Activated CD4-positive, alpha-beta memory T cell treated with anti-CD3 and anti-CD28 coated beads, Interleukin-2, amount 10 ng/mL, durations not matched to agents 7 days and 5 days (primary cell): ENCODE measurements at regions of chr14 and their contacts with region 1.

Region 1: DNA sequence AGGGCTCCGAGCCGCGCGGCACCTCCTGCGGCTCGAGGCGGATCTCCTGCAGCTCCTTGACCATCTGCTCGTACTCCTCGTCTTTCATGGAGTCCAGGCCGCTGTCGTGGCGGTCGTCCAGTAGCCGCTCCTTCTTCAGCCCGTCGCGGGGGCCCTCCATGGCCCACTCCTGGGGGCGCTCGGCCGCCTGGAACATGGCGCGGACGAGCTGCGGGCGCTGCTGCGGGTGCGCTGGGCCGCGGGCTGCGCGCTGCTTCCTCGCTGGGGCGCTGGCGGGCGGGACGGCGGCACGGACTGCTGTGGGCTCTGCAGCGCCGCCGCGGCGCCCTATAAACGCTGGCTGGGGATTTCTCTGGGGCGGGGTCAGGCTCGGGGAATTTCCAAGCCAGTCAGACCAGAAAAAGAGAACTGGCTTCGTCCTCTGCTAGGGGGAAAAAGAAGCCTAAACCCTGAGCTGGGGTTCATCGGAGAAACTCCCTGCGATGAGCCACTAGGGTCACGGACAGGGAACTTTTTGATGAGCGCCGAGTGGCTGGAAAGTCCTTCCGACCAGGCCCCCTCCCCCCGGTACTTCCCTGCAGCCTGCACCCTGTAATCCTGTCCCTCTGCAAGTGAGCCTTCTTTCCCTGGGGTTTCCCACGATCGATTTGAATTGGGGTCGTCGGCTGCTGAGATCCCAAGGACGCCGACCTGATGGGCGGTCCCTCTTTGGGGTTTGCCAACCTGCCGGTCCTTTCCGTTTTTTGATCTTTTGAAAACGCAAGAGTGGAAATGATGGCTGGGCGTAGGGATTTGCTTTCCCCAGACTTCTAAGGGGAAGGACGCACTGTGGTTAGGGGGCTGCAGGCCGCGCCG is at the start of gene NFKBIA:
- DNase-seq: peak; percentile 92
- H3K4me3 Mint-ChIP-seq: peak within 1 kb of the TSS; percentile 92
- H3K27ac Mint-ChIP-seq: peak within 1 kb of the TSS; percentile 95
- H3K4me1 Mint-ChIP-seq: peaks cover 54% of the 10 kb centered on the region
- H3K27me3 Mint-ChIP-seq: no peaks in the 10 kb centered on the region
- total RNA-seq, gene NFKBIA: 102 to 109 TPM

Region 2: DNA sequence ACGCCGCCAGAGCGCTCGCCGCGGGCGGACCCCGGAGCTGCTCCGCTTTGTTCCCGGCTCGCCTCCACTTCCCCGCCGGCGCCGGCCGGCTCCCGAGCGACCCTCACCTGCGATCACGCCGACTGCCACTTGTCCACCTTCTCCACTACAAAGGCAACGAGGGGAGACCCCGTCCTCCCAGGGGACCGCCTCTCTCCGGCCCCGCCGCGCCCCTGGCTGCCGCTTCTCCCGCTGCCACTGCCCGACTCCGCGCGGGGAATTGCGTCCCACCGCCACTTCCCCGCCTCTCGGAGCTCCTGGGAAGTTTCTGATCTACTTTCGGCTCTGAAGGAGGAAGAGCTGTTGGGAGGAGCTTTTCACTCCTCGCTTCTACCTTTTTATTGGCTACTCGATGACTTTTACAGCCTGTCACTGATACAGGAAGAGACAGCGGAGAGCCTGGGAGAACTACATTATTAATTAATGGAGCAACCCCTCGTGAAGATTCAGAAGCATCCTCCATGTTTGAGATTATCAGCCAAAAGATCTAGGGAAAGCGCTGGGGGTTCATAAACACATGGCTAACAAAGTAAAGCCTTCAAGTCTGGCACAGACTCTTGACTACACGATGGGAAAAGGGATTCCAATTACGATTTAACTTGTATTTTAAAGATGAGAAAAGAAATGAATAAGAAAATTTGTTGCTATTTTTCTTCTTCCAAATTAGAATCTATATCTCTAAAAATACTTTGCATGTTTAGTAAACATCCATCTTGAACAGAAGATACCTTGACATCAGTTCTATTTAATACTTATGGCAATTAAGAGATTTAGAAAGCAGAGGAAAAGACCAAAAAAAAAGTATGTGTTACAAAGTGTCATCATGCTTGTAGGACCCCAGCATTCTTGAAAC is 529.4 kb before region 1 on chr14 and contains the start of gene BAZ1A:
- CTCF ChIA-PET with region 1: no interaction called
- POLR2A ChIA-PET with region 1: interaction called, 12 read pairs
- DNase-seq: peak; percentile 44
- H3K4me3 Mint-ChIP-seq: peak within 1 kb of the TSS; percentile 96
- H3K27ac Mint-ChIP-seq: peak within 1 kb of the TSS; percentile 99
- H3K4me1 Mint-ChIP-seq: peaks cover 37% of the 10 kb centered on the region
- H3K27me3 Mint-ChIP-seq: no peaks in the 10 kb centered on the region
- total RNA-seq, gene BAZ1A: 49.8 to 53.1 TPM

Region 3: DNA sequence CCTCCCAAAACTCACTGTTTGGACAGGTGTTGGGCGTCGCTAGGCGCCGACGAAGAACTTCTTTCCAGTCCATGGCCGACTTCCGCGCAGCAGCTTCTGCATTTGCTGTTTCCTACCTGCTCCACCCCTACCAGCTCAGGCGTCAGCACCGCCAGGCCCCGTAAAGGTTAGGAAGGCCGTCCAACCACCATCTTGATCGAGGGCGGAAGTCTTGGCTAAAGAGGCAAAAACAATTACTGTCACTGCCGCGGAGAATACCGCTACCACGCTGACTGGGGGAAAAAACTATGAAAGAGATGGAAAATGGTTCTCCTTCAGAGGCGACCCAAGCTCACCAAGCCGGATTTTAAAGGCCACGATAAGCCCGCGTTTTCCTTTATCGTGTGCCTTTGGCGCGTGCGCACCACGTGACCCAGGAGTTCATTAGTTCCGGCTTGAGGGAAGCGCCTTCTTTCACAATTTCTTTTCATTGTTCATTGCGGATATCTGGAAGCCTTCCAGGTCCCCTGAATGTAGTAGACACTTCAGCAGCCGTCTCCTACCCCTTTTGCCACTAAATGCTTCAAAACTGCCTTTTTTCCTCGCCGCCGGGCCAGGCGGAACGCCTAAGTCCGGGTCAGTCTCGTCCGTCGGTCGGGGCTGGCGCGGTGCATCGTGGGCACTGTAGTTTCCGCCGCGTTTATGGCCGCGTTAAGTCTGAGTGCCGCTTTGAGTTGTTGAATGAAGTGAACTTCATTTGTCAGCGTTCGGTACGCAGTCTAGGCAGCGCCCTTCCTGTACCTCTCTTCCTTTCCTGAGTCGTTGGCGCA is 282.6 kb before region 1 on chr14 and contains the starts of genes PPP2R3C and PRORP:
- CTCF ChIA-PET with region 1: interaction called, 16 read pairs
- POLR2A ChIA-PET with region 1: interaction called, 55 read pairs
- DNase-seq: peak; percentile 92
- H3K4me3 Mint-ChIP-seq: peak within 1 kb of the TSS; percentile 91
- H3K27ac Mint-ChIP-seq: peak within 1 kb of the TSS; percentile 98
- H3K4me1 Mint-ChIP-seq: peaks cover 59% of the 10 kb centered on the region
- H3K27me3 Mint-ChIP-seq: no peaks in the 10 kb centered on the region
- total RNA-seq, gene PPP2R3C: 51.7 to 59.4 TPM
- total RNA-seq, gene PRORP: 43.3 to 44.9 TPM

Region 4: DNA sequence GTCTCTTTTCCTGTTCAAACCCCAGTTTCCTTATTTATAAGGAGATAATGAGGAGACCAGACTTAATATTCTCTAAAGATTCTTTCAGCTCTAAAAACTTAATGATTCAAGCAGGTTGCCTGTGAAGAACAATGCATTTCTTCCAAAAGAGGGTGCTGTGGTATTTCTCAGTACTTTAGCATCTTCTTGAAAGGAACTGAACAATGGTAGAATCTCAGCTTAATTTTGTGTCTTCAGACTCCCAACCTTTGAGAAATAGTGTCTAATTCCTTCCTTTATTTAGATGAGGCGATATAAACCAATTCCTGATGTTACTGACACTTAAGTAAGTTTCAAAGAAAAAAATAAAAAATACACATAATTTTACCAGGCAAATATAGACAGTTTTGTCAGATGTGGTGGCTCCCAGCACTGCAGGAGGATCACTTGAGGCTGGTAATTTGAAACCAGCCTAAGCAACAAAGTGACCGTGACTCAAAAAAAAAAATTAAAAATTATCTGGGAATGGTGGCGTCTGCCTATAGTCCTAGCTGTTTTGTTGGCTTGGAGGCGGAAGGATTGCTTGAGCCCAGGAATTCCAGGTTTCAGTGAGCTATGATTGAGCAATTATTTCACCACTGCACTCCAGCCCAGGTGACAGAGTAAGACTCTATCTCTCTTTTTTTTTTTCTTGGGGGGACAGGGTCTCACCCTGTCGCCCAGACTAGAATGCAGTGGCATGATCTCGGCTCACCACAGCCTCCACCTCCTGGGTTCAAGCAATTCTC is 189.4 kb before region 1 on chr14:
- CTCF ChIA-PET with region 1: interaction called, 14 read pairs
- POLR2A ChIA-PET with region 1: interaction called, 5 read pairs
- DNase-seq: no peak
- H3K4me3 Mint-ChIP-seq: no peak overlapping the region
- H3K27ac Mint-ChIP-seq: no peak overlapping the region
- H3K4me1 Mint-ChIP-seq: peaks cover 22% of the 10 kb centered on the region
- H3K27me3 Mint-ChIP-seq: no peaks in the 10 kb centered on the region

Region 5: DNA sequence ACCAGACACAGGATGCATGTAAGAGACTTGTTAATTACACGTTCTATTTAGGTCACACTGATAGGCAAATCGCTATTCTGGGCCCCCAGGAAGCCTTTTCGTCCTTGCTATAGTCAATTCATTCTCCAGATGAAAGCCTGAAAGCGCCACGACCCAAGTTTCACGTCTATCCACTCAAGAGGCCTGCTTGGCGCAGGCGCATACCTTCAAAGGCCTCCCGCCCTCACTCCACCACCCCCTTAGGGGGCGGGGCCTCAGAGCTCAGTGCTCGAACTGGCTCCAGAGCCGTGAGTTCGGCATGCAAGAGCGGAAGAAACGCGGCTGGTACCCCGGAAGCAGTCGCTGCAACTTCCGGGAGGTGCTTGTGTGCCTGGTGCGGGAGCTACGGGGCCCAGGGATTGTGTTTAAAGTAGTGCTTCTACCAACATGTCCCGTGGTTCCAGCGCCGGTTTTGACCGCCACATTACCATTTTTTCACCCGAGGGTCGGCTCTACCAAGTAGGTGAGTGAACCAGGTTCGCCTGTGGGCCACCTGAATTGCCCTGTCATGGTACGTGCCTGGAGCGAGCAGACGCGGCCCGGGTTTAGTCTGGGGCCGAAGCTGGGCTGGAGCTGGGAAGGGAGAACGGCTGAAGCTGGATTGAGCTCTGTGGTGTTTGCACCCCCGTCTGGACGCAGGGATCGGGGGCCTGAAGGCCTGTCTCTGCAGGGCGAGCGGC is 112.5 kb before region 1 on chr14 and contains the start of gene PSMA6:
- CTCF ChIA-PET with region 1: interaction called, 36 read pairs
- POLR2A ChIA-PET with region 1: interaction called, 155 read pairs
- DNase-seq: peak; percentile 100
- H3K4me3 Mint-ChIP-seq: peak within 1 kb of the TSS; percentile 96
- H3K27ac Mint-ChIP-seq: peak within 1 kb of the TSS; percentile 92
- H3K4me1 Mint-ChIP-seq: peaks cover 42% of the 10 kb centered on the region
- H3K27me3 Mint-ChIP-seq: no peaks in the 10 kb centered on the region
- total RNA-seq, gene PSMA6: 235 to 242 TPM

Region 6: DNA sequence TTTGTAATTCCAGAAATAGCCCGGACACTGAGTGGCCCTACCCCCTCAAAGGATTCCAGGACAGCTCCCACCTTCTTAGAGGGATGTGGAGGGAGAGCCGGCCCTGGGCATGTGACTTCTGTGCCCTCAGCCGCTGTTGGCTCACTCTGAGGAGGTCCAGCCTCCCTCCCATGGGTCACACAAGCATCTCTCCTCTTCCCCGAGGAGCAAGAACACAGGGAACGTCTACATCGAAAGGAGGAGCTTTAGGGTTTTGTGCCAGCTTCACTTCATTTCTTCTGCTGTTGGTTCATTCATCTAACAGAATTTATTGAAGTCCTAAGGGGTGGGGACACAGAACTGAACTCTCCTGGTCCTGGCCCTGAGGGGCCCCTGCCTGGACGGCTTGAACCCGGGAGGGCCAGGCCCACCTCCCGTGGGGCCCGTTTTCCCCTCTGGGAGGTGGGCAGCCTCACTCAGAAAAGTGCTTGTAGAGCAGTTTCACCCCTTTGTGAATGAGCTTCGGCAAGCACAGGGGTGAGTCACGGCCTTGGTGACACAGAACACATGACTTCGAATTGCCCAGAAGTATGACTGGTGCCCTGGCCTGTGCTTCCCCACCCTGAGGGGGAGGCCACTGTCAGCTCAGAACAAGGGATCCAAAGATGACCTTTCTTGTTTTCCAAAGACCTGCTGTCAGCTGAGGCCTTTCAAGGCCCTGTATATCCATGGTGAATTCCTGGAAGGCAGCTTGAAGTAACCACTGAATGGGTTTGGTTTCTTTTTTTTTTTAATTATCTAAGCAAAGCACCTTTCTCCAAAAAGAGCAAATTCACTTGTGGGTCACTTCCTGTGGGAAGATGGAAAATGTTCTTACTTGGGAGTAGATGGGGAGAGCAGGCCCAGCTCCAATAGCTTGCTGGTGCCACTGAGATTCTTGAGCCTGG is 39.3 kb before region 1 on chr14:
- CTCF ChIA-PET with region 1: interaction called, 11 read pairs
- POLR2A ChIA-PET with region 1: interaction called, 26 read pairs
- DNase-seq: peak; percentile 76
- H3K4me3 Mint-ChIP-seq: no peak overlapping the region
- H3K27ac Mint-ChIP-seq: peak overlapping the region; percentile 66
- H3K4me1 Mint-ChIP-seq: peaks cover 33% of the 10 kb centered on the region
- H3K27me3 Mint-ChIP-seq: no peaks in the 10 kb centered on the region

Region 7: DNA sequence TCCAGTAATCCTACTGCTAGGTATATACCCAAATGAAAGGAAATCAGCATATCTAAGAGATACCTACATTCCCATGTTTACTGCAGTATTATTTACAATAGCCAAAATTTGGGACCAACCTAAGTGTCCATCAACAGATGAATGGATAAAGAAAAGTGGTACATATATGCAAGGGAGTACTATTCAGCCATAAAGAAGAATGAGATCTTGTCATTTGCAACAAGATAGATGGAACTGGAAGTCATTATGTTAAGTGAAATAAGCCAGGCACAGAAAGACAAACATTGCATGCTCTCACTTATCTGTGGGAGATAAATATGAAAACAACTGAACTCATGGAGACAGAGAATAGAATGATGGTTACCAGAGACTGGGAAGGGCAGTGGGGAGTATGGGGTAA is 238.8 kb after region 1 on chr14:
- CTCF ChIA-PET with region 1: no interaction called
- POLR2A ChIA-PET with region 1: no interaction called
- DNase-seq: no peak
- H3K4me3 Mint-ChIP-seq: no peak overlapping the region
- H3K27ac Mint-ChIP-seq: no peak overlapping the region
- H3K4me1 Mint-ChIP-seq: no peaks in the 10 kb centered on the region
- H3K27me3 Mint-ChIP-seq: no peaks in the 10 kb centered on the region